ENCODE measurements at regions of chr18 and their contacts with region 1.

Region 1: DNA sequence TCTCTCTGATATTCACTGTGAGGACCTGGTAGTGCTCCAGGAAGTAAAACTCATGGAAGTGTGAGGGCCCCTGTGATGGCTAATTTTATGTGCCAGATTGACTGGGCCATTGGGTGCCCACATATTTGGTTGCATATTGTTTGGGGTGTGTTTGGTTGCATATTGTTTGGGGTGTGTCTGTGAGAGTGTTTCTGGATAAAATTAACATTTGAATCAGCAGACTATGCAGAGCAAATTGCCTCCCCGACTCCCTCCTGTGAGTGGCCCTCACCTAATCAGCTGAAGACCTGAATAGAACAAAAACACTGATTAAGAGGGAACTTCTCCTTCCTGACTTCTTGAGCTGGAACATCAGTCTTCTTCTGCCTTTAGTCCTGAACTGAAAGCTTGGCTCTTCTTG is 173.3 kb upstream of the LINC00305 start:
- DNase-seq: no peak
- ATAC-seq: no peak
- H3K4me3 ChIP-seq: no peak overlapping the region
- H3K27ac ChIP-seq: no peak overlapping the region
- H3K4me1 ChIP-seq: no peaks in the 10 kb centered on the region
- H3K27me3 ChIP-seq: no peaks in the 10 kb centered on the region
- CTCF ChIP-seq: no peak

Region 2: DNA sequence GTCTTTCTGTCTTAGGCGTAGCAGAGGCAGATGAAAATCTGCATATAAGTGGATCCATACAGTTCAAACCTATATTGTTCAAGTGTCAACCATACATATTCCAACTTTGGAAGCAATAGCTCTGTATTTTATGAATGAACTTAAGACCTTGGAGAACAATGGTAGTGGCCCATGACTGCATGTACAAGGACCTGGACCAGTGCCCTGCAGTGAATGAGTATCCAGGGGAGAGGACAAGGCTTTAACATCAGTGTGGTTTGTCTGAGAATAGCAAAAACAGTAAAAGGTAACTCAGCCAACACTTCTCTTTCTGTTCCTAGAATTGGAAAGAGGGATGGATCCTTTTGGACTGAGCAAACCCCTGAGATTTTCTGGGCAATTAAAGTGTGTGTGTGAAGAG is 57.5 kb after region 1 on chr18:
- intact Hi-C with region 1: loop called in 1 of 10 experiments (anchors 10 kb)
- DNase-seq: no peak
- ATAC-seq: no peak
- H3K4me3 ChIP-seq: no peak overlapping the region
- H3K27ac ChIP-seq: no peak overlapping the region
- H3K4me1 ChIP-seq: no peaks in the 10 kb centered on the region
- H3K27me3 ChIP-seq: no peaks in the 10 kb centered on the region
- CTCF ChIP-seq: no peak

Region 3: GRCh38 chr18:65279668-65280305 is 957.6 kb after region 1 on chr18:
- intact Hi-C with region 1: no loop called
- DNase-seq: no peak
- ATAC-seq: no peak
- H3K4me3 ChIP-seq: no peak overlapping the region
- H3K27ac ChIP-seq: no peak overlapping the region
- H3K4me1 ChIP-seq: no peaks in the 10 kb centered on the region
- H3K27me3 ChIP-seq: no peaks in the 10 kb centered on the region
- CTCF ChIP-seq: no peak